Endothelial cell of umbilical vein (primary cell): ENCODE measurements at regions of chr7 and their contacts with region 1.

Region 1: GRCh38 chr7:51162724-51163329 is 153.8 kb downstream of the COBL start:
- DNase-seq: peak; percentile 85
- H3K4me3 ChIP-seq: no peak overlapping the region
- H3K27ac ChIP-seq: no peak overlapping the region
- H3K4me1 ChIP-seq: no peaks in the 10 kb centered on the region
- H3K27me3 ChIP-seq: peaks cover 0 to 16% of the 10 kb centered on the region in 2 experiments
- CTCF ChIP-seq: peak; percentile 83
- POLR2A ChIP-seq: no peak

Region 2: DNA sequence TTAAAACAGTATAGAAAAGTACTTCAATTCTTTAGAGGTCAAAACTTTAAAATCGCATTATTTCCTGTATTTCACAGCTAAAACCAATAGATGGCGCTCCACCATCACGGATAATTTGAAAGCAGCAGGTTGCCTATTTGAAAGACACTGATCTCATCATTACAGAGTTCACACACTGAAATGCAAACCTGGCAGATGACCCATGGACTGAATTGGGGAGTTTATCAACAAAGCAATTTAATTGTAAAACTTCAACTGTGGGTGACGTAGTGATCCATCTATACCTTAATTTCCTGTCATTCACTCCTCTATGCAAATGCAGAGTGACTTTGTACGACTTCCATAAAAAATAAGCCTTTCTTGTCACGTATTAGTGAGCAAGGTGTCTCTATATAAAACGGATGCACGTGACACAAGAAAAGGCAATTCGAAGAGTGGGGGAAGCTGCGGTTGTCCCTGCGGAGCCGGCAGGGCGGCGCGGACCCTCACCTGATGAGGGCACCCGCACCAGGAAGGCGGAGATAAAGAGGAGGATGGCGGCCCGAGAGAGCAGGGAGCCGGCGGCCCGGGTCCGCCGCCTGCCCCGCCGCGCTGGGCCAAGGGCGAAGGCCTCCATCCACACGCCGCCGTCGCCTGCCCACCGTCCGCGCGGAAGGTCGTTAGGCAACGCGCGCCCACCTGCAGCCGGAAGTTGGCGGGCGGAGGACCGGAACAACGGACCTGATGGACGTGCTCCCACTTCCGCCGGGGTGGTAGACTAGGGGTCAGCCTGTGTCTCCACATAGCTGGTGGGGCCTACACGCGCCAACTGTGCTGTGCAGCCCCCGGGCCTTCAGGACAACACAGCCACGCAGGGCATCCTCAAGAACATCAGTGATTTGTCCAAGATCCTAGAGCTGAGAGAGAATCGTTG is 1070.0 kb before region 1 on chr7 and contains the start of gene ZPBP:
- CTCF ChIA-PET with region 1: interaction called, 59 read pairs
- POLR2A ChIA-PET with region 1: no interaction called
- dilution Hi-C with region 1: no loop called
- intact Hi-C with region 1: loop called (anchors 2 kb)
- DNase-seq: peak; percentile 40
- H3K4me3 ChIP-seq: peak within 1 kb of the TSS in 1 of 3 experiments; percentile 23
- H3K27ac ChIP-seq: no peak within 1 kb of the TSS
- H3K4me1 ChIP-seq: peaks cover 3% of the 10 kb centered on the region
- H3K27me3 ChIP-seq: no peaks in the 10 kb centered on the region
- CTCF ChIP-seq: peak; percentile 48 to 49
- POLR2A ChIP-seq: no peak
- total RNA-seq, gene ZPBP: not detected in 2 replicates

Region 3: DNA sequence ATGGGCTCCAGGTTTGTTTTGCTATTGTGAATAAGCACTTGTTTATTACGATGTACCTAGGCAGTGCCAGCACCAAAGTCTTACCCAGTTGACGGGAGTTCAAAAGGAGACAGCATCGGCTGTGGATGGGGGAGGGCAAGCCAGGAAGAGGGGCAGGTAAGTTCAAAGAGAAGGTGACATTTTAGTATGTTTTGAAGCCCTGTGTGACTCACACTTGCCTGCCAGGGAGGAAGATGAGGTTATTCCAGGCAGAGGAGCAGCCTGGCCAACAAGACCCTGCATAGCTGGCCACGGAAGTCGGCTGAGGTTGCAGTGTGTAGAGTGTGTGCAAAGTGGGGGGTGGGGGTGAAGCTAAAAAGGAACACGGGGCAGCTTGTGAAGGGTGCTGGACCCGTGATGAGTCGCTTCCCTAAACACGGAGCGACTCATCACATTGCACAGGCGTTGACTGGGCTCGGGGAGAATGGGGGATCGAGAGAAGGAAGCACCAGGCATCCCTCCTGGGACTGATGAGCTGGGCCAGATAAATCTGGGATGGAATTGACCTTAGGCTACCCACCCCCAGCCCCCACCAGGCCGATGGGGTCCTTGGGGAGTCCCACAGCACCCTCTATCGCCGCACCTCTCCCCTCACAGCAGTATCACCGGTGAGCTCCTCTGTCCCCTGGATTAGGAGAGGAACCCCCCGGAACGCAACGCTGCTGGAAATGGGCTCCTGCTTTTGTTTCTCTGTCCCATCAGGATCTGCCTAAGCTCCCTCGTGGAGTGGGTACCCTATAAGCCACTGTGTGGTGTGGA is 956.2 kb before region 1 on chr7:
- CTCF ChIA-PET with region 1: interaction called, 196 read pairs
- POLR2A ChIA-PET with region 1: no interaction called
- dilution Hi-C with region 1: no loop called
- intact Hi-C with region 1: loop called (anchors 1 kb)
- DNase-seq: no peak
- H3K4me3 ChIP-seq: no peak overlapping the region
- H3K27ac ChIP-seq: no peak overlapping the region
- H3K4me1 ChIP-seq: no peaks in the 10 kb centered on the region
- H3K27me3 ChIP-seq: no peaks in the 10 kb centered on the region
- CTCF ChIP-seq: no peak
- POLR2A ChIP-seq: no peak

Region 4: DNA sequence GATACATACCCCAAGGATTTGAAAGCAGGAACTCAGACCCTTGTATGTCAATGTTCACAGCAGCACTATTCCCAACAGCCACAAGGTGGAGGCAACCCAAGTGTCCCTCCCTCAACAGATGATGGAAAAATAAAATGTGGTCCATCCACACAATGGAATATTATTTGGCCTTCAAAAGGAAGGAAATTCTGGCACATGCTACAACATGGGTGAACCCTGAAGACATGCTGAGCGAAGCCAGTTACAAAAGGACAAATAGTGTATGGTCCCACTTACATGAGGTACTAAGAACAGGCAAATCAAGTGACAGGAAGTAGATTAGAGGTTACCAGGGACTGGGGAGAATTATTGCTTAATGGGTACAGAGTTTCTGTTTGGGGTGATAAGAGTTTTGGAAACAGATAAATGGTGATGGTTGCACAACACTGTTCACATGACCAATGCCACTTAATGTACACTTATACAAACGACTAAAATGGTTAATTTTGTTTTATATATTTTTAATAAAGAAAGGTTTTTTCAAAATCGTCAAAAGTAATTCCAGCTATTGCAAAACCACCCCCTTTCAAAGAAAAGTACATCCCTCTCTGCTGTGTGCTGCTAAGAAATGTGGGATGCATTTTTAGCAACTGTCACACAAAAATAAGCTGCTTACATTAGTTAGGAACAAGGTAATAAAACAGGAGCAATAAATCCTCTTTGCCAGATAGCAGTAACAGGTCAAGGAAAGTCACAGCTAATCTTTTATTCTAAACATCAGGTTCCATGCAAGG is 465.8 kb before region 1 on chr7:
- CTCF ChIA-PET with region 1: interaction called, 4 read pairs
- POLR2A ChIA-PET with region 1: no interaction called
- dilution Hi-C with region 1: no loop called
- intact Hi-C with region 1: loop called (anchors 1 kb)
- DNase-seq: peak; percentile 29
- H3K4me3 ChIP-seq: no peak overlapping the region
- H3K27ac ChIP-seq: no peak overlapping the region
- H3K4me1 ChIP-seq: peaks cover 16% of the 10 kb centered on the region
- H3K27me3 ChIP-seq: no peaks in the 10 kb centered on the region
- CTCF ChIP-seq: peak; percentile 38 to 39
- POLR2A ChIP-seq: no peak

Region 5: DNA sequence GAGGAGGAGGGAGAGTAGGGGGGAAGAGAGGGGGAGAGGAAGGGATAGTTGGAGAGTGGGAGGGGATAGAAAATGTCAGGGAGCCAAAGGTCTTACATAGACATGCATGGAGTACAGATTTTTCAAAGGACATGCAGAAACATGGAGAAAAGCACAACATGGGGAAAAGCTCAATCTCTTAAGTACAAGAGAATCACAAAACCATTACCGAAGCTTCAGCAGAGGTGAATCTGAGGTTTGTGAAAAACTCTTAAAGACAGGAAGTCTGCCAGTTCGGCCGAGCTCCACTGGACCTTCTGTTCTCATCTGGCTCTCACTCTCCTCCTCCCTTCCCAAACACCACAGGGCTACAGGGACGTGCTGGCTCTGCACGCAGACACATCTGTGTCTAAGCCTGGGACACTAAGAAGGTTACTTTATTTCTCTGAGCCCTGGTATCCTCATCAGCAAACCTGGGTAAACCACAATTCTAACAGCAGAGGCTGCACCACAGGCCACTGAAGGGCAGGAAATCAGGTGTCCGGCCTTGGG is 19.9 kb after region 1 on chr7:
- CTCF ChIA-PET with region 1: interaction called, 21 read pairs
- POLR2A ChIA-PET with region 1: no interaction called
- dilution Hi-C with region 1: no loop called
- intact Hi-C with region 1: no loop called
- DNase-seq: no peak
- H3K4me3 ChIP-seq: no peak overlapping the region
- H3K27ac ChIP-seq: no peak overlapping the region
- H3K4me1 ChIP-seq: no peaks in the 10 kb centered on the region
- H3K27me3 ChIP-seq: peaks cover 0 to 4% of the 10 kb centered on the region in 2 experiments
- CTCF ChIP-seq: no peak
- POLR2A ChIP-seq: no peak

Region 6: GRCh38 chr7:51430480-51431086 is 267.8 kb after region 1 on chr7:
- CTCF ChIA-PET with region 1: interaction called, 20 read pairs
- POLR2A ChIA-PET with region 1: no interaction called
- dilution Hi-C with region 1: no loop called
- intact Hi-C with region 1: no loop called
- DNase-seq: peak; percentile 52
- H3K4me3 ChIP-seq: no peak overlapping the region
- H3K27ac ChIP-seq: no peak overlapping the region
- H3K4me1 ChIP-seq: no peaks in the 10 kb centered on the region
- H3K27me3 ChIP-seq: no peaks in the 10 kb centered on the region
- CTCF ChIP-seq: peak; percentile 48 to 59
- POLR2A ChIP-seq: no peak